Lower lobe of right lung (tissue), 2 donors: ENCODE measurements at regions of chr11 and their contacts with region 1.

Region 1: DNA sequence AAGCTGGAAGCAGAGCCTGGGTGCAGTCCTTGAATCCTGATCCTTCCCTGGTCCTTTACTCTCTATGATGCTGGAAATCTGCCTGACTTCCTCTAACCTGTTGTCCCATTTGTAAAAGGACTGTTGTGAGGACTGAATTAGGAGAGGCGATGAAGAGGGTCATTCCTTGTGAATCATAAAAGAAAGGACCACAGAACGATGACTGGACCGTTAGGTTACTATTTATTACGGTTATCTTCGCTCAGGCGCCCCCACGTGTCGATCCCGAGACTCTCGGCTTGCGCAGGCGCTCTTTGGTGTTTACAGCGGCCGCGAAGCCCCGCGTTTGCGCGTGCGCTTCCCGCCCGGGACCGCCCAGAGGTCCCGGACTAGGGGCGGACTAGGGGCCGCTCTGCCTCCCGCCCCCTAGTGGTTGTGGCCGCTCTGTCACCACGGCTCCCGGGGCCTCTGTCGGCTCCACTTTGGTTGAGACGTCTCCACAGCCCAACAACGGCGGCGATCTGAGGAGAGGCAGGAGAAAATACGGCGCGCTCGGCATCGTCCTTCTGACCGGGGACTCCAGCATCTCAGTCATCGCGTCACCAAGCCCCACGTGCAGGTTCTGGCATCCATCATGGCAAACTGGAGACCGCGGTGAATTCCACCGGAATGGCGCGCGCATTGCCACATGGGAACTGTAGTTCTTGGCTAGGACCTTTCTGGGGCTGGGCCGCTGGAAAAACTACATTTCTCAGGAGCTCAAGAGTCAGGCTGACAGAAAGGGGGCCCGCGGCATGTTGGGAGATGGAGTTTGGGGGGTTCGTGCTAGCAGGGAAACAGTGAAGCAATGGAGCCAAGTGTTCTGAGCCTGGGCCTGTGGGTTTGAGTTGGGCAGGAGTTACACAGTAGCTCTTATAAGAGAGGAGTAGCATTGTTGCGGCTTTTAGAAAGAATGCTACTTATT is at the start of gene STARD10:
- DNase-seq: peak; percentile 97
- ATAC-seq: peak; percentile 98
- H3K4me3 ChIP-seq: peak within 1 kb of the TSS; percentile 70
- H3K27ac ChIP-seq: peak within 1 kb of the TSS; percentile 79
- H3K4me1 ChIP-seq: peaks cover 41% of the 10 kb centered on the region
- H3K27me3 ChIP-seq: no peaks in the 10 kb centered on the region
- CTCF ChIP-seq: peak; percentile 98
- total RNA-seq, gene STARD10: 126 TPM

Region 2: GRCh38 chr11:72736452-72737069 is 57.1 kb before region 1 on chr11:
- intact Hi-C with region 1: loop called (anchors 10 kb)
- DNase-seq: peak; percentile 86
- ATAC-seq: peak; percentile 68 to 78
- H3K4me3 ChIP-seq: peak overlapping the region; percentile 41
- H3K27ac ChIP-seq: peak overlapping the region; percentile 86
- H3K4me1 ChIP-seq: peaks cover 92% of the 10 kb centered on the region
- H3K27me3 ChIP-seq: no peaks in the 10 kb centered on the region
- CTCF ChIP-seq: no peak